Activated B cell treated with CpG ODN at 0.5 μM for 24 hours (primary cell): ENCODE measurements at regions of chr12 and their contacts with region 1.

Region 1: GRCh38 chr12:10140001-10140400 is 10.0 kb upstream of the CLEC7A start:
- DNase-seq: no peak
- ATAC-seq: peak; percentile 60
- H3K4me3 Mint-ChIP-seq: no peak overlapping the region
- H3K27ac Mint-ChIP-seq: no peak overlapping the region
- H3K4me1 Mint-ChIP-seq: no peaks in the 10 kb centered on the region
- H3K27me3 Mint-ChIP-seq: peaks cover 27% of the 10 kb centered on the region
- CTCF ChIP-seq: no peak

Region 2: DNA sequence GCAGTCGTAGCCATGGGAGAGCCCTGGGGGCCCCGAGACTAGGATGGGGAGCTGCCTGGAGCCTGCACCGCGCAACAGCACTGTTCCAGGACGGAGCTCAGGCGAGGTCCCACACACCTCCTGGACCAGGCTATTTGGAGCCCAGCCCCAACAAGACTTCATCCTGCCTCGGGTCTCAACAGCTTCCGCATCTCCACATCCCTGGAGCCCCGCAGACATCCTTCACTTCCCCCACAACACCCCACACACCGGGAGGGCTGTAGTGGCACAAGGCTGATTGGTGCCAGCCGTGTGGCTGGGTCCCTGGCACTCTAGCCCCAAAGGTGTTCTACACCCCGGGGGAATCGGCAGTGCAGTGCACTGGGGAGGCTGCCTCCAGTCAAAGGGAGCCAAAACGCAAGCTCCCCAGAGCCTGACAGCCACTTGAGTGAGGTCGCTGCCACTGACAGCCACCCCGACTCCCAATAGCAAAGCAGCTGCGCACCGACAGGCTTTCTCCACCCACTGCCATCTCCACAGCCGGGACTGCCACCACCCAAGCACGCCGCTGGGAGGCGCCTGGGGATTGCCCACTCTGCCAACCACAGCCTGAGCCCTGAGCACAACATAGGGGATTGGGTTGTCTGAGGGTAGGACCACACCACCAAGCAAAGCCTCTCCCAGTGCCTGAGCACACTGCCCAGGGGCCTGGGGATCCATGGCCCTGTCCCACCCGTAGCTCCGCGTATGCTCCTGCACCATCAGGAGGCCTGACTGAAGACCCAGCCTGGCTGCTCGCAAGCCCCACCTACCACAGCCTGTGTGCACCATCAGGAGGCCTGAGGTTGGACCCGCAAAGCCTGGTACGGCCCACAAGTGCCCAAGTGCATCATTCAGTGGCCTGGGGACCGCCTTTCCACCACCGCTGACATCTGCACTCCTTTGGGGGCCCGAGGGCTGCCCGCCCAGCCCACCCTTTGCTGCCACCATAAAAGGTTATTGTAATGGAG is 325.9 kb before region 1 on chr12:
- CTCF ChIA-PET with region 1: interaction called, 8 read pairs
- POLR2A ChIA-PET with region 1: interaction called, 4 read pairs
- intact Hi-C with region 1: loop called (anchors 1 kb)
- DNase-seq: peak; percentile 80
- ATAC-seq: peak; percentile 97
- H3K4me3 Mint-ChIP-seq: peak overlapping the region; percentile 73
- H3K27ac Mint-ChIP-seq: no peak overlapping the region
- H3K4me1 Mint-ChIP-seq: peaks cover 20% of the 10 kb centered on the region
- H3K27me3 Mint-ChIP-seq: peaks cover 18% of the 10 kb centered on the region
- CTCF ChIP-seq: peak; percentile 47

Region 3: DNA sequence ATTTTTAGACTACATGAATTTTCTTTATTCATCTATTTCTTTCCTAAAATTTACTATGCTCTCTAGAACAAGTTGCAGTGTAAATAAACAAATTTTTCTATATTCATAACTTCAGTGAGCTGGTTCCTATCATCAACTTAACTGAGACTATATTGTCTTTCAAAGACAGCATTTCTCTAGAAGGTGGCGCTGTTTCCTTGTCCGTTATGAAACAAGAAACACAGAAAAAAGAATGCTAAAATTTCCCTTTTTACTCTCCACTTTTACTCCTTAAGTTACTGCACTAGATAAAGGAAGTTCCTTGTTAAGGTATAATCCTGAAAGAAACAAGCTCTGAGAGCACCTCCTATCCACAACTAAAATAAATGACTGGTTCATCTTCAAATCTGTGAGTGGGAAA is 199.6 kb before region 1 on chr12:
- CTCF ChIA-PET with region 1: interaction called, 8 read pairs
- POLR2A ChIA-PET with region 1: no interaction called
- intact Hi-C with region 1: loop called (anchors 1 kb)
- DNase-seq: no peak
- ATAC-seq: no peak
- H3K4me3 Mint-ChIP-seq: no peak overlapping the region
- H3K27ac Mint-ChIP-seq: no peak overlapping the region
- H3K4me1 Mint-ChIP-seq: peaks cover 18% of the 10 kb centered on the region
- H3K27me3 Mint-ChIP-seq: peaks cover 8% of the 10 kb centered on the region
- CTCF ChIP-seq: no peak

Region 4: DNA sequence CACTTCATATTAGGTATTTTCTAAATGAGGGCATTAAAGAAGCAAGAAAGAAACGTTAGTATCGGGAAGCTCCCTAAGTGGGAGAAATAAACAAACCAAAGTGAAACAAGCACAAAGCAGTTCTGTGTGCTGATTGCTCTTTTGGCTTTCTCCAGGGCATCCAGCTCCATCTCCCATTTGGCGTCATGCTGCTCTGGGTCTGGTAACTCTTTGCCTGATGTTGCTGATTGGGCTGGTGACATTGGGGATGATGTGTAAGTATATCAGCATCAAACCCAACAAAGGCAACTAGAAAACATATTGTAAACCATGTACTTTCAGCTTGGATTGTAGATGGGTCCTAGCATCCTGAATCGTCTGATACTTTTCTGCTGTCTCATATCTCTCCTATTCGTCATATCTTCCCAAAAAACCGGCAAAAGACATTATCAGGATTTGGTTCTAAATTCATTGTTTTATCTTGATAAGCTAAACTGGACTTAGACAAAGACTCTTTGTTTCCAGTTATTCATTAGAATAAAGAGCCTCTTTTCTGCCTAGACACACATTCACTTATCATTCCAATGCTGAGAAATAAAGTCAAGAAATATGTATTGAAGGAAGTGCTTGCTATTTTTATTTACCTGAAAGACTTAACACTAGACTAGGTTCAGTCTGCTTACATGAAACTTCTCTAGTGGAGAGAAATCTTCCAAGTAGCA is 127.2 kb before region 1 on chr12:
- CTCF ChIA-PET with region 1: interaction called, 10 read pairs
- POLR2A ChIA-PET with region 1: no interaction called
- intact Hi-C with region 1: no loop called
- DNase-seq: no peak
- ATAC-seq: no peak
- H3K4me3 Mint-ChIP-seq: no peak overlapping the region
- H3K27ac Mint-ChIP-seq: no peak overlapping the region
- H3K4me1 Mint-ChIP-seq: no peaks in the 10 kb centered on the region
- H3K27me3 Mint-ChIP-seq: peaks cover 34% of the 10 kb centered on the region
- CTCF ChIP-seq: no peak

Region 5: DNA sequence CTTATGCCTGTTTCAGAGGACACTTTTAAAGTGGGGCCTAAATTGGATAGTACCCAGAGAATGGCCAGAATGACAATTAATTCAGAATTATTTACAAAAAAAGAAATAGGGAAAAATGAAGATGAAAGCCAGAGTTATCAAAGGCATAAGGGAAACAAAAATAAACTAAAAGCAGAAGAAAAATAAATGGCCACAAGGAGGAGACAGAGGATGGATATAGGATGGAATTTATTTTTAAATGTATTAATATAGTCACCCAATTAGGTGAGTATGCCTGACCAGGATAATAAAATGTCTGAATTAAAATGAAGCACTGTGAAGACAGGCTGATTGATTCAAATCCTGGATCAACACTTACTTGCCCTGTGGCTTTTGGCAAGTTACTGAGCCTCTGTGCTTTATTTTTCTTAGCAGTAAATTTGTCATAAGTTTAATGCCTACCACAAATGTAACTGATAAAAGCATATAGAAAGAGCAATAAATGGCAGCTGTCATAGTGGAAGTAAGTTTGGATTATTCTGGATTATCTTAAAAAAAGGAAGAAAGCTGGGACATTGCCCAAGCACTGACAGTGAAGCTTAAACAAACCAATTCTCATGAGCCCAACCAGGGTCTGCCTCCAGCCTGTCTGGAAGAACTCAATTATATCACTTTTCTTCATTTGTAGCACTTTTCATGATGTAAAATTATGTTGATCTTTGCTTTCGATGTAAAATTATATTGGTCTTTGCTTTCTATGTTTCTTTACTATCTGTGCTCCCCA is 106.0 kb before region 1 on chr12:
- CTCF ChIA-PET with region 1: interaction called, 6 read pairs
- POLR2A ChIA-PET with region 1: no interaction called
- intact Hi-C with region 1: loop called (anchors 1 kb)
- DNase-seq: no peak
- ATAC-seq: no peak
- H3K4me3 Mint-ChIP-seq: no peak overlapping the region
- H3K27ac Mint-ChIP-seq: no peak overlapping the region
- H3K4me1 Mint-ChIP-seq: no peaks in the 10 kb centered on the region
- H3K27me3 Mint-ChIP-seq: peaks cover 4% of the 10 kb centered on the region
- CTCF ChIP-seq: no peak